ENCODE measurements at regions of chr1 and their contacts with region 1.

Region 1: DNA sequence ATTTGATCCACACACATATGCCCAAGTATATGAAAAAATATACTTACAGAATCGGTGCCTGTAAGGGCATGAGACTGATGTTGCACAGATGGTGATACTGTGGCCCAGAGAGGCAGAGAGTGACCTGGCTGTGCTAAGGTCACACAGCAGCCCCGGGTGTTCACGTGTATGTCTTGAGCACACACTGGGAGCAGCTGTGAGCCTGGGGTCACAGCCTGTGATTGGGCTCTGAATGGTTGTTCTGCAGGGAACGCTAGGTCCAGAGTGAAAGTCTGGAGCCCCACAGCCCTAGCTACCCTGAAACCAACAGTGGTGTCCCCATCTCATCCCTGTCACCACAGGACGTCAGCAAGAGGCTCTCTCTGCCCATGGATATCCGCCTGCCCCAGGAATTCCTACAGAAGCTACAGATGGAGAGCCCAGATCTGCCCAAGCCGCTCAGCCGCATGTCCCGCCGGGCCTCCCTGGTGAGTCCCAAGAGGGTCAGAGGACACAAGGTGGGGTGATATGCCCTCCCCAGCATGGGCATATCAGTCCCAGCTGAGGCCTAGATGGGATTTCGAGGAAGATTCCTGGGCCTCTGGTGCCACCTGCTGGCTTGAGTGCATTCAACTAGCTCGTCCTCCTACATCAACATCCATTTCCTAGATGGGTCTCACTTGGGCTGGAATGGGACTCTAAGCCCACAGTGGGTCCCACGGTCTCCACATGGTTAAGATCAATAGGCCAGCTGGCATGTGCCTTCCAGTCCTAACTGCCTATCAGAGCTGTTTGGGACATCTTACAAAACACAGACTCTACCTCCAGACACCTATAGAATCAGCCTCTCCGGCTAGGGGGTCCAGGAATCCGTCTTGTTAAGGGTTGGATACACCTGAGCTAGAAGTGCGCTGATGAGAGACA is 19.7 kb downstream of the CDK18 start:
- DNase-seq: peak; percentile 91
- H3K27ac ChIP-seq: peak overlapping the region; percentile 19; the same call in 1 of the 2 replicates
- CTCF ChIP-seq: peak; percentile 75

Region 2: GRCh38 chr1:205335643-205336091 is 188.5 kb before region 1 on chr1:
- CTCF ChIA-PET with region 1: interaction called, 51 read pairs
- POLR2A ChIA-PET with region 1: no interaction called
- DNase-seq: peak; percentile 90
- H3K27ac ChIP-seq: no peak overlapping the region
- CTCF ChIP-seq: peak; percentile 90

Region 3: DNA sequence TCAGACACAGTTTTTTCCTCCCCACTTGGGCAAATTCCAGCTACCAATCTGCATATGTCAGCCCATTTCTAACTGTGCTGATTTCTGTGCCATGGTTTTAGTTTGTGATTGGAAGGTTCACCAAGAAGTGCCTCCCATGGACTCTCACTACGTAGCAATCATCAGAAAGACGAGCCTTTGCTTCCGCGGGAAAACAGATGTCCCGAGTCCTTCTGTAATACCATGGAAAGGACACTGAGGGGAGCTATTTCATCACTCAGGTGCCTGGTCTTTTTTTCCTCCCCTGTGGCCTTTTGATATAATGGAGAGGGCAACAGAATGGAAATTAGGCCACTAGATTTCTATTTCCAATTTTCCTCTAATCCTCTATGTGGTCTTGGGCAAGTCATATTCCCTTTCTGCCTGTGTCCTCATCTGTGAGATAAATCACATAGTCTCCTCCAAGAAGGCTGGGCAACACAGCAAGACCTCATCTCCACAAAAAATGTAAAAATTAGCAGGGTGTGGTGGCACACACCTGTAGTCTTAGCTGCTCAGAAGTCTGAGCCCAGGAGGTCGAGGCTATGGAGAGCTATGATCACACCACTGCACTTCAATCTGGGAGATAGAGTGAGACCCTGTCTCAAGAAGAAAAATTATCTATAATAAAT is 127.0 kb before region 1 on chr1:
- CTCF ChIA-PET with region 1: interaction called, 45 read pairs
- POLR2A ChIA-PET with region 1: no interaction called
- DNase-seq: peak; percentile 87
- H3K27ac ChIP-seq: no peak overlapping the region
- CTCF ChIP-seq: peak; percentile 74

Region 4: GRCh38 chr1:205512059-205513045 is 11.8 kb before region 1 on chr1:
- CTCF ChIA-PET with region 1: interaction called, 14 read pairs
- POLR2A ChIA-PET with region 1: interaction called, 4 read pairs
- DNase-seq: no peak
- H3K27ac ChIP-seq: peak overlapping the region; percentile 10
- CTCF ChIP-seq: no peak

Region 5: DNA sequence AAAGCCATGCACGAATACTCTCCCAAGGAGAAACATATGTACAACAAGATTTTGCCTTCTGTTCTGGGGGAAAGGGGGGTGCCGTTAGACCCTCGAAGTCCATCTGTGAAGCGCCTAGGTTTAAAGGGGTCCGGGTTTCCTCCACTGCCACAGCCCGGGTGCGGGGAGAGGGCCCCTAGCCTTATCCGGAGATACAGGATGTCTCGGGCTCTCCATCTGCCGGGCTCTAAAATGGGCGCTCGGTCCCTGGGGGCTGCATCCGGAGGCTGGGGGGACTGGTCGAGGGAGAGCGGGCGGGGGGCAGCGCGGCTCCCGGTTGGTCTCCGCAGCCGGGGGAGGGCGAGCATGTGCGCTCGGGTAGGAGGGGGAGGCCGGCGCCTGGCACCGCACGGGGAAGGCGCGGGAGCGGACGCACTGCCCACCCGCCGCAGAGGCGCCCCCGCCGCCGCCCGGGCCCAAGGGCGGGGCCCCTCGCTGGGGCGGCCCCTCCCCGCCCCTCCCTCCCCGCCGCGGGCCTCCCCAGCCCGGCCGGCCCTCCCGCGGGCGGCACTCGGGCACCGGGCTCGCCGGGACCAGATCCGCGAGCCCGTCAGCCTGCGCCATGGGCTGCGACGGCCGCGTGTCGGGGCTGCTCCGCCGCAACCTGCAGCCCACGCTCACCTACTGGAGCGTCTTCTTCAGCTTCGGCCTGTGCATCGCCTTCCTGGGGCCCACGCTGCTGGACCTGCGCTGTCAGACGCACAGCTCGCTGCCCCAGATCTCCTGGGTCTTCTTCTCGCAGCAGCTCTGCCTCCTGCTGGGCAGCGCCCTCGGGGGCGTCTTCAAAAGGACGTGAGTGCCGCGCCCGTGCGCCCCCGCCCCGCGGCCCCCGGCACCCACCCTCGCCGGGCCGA is 44.6 kb after region 1 on chr1:
- CTCF ChIA-PET with region 1: interaction called, 11 read pairs
- POLR2A ChIA-PET with region 1: no interaction called
- DNase-seq: peak; percentile 34
- H3K27ac ChIP-seq: no peak overlapping the region
- CTCF ChIP-seq: no peak

Measured in RWPE1 (cell line).